Breast epithelium (tissue), 4 donors: ENCODE measurements at regions of chr1 and their contacts with region 1.

Region 1: DNA sequence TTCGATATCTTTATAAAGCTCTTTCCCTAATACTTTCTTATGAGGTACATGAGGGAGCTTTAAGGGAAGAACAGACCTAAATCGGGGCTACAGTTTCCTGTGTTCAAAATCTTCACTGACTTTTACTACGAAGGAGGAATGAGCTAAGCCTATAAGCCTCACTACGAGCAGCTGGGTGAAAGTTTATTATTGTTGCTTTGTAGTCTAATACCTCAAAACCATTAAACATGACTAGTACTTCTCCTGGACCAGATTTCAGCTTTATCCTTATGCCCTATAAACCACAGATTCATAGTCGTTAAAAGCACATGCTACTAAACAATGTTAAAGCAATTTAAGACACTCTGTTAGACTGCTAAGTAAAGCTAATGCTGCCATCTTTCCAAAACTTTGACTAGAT is 30.2 kb downstream of the NDC1 start:
- DNase-seq: no peak
- H3K4me3 ChIP-seq: no peak overlapping the region
- H3K27ac ChIP-seq: no peak overlapping the region
- H3K4me1 ChIP-seq: no peaks in the 10 kb centered on the region
- H3K27me3 ChIP-seq: no peaks in the 10 kb centered on the region
- CTCF ChIP-seq: no peak
- POLR2A ChIP-seq: no peak

Region 2: DNA sequence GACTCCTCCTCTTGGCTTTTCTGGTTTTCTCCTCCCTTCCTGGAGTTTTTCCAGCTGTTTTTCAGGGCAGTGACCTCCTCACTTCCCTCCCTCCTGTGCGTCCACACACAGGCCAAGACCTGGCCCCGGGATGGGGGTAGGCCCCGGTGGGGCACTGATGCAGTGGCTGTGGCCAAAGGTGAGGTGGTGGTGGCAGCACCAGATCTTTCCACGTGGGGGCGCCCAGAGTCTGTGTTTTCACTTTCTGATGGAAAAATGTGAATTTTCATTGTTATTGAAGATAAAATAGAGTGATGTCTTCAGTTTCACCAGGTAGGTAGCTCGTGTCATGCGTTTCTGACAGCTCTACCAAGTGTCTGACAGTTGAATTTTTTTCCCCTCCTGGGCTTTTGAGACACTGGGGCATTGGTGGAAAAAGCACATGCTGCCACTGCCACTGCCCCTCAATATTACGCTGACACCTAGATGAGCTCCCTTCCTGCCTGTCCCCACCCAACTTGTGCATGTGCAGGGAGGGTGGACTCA is 529.7 kb before region 1 on chr1:
- intact Hi-C with region 1: no loop called
- DNase-seq: peak in 1 of 2 donors; percentile 21
- H3K4me3 ChIP-seq: no peak overlapping the region
- H3K27ac ChIP-seq: no peak overlapping the region
- H3K4me1 ChIP-seq: no peaks in the 10 kb centered on the region
- H3K27me3 ChIP-seq: no peaks in the 10 kb centered on the region
- CTCF ChIP-seq: peak; percentile 72 to 94 (median 89)
- POLR2A ChIP-seq: no peak

Region 3: GRCh38 chr1:53781654-53782053 is 26.3 kb before region 1 on chr1:
- intact Hi-C with region 1: loop called (anchors 2 kb)
- DNase-seq: no peak
- H3K4me3 ChIP-seq: no peak overlapping the region
- H3K27ac ChIP-seq: no peak overlapping the region
- H3K4me1 ChIP-seq: no peaks in the 10 kb centered on the region
- H3K27me3 ChIP-seq: no peaks in the 10 kb centered on the region
- CTCF ChIP-seq: no peak
- POLR2A ChIP-seq: no peak

Region 4: DNA sequence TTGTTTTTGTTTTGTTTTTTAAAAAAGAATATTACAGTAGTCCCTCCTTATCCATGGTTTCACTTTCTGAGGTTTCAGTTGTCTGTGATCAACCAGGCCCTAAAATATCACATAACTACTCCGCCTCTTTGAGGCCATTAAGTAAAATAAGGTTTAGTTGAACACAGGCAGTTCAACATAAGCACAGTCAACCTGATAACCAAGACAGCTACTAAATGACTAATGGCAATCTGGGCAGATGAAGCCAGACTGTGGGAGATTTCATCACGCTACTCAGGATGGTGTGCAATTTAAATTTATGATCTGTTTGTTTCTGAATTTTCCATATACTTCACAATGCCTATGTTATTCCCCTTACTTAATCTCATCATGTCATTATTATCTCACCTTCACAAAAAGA is 180.0 kb after region 1 on chr1:
- intact Hi-C with region 1: loop called (anchors 5 kb)
- DNase-seq: no peak
- H3K4me3 ChIP-seq: no peak overlapping the region
- H3K27ac ChIP-seq: no peak overlapping the region
- H3K4me1 ChIP-seq: no peaks in the 10 kb centered on the region
- H3K27me3 ChIP-seq: no peaks in the 10 kb centered on the region
- CTCF ChIP-seq: no peak
- POLR2A ChIP-seq: no peak

Region 5: DNA sequence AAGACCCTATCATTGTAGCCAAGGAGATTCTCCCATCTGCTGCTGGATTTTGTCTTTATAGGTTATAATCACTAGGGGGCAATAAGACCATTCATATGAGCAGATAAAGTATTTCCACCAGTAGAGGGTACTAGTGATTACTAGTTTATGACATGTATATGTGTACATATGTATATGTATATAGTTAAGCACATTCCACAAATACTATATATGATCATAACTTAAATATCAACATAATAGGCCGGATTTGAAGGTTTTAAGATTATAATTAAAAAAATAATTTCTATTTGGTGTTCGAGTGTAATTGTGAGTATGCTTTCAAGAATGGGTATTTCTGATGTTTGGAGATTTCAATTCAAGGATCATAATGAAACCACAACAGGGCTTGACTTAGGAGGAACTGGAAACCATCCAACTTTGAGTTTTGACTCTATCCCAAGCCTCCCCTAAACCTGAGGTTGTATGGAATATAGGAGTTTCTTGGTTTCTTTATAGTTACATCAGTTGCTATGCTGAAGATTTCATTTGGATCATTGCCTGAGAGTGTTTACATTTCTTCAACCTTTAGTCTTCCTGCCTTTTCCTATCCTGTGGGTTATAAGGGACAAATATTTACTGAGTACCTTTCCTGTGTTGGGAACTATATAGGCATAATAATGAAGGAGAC is 262.4 kb after region 1 on chr1:
- intact Hi-C with region 1: no loop called
- DNase-seq: no peak
- H3K4me3 ChIP-seq: no peak overlapping the region
- H3K27ac ChIP-seq: no peak overlapping the region
- H3K4me1 ChIP-seq: no peaks in the 10 kb centered on the region
- H3K27me3 ChIP-seq: no peaks in the 10 kb centered on the region
- CTCF ChIP-seq: peak in 2 of 3 donors; percentile 59 to 75
- POLR2A ChIP-seq: no peak